H1 (cell line): ENCODE measurements at regions of chrX and their contacts with region 1.

Region 1: GRCh38 chrX:115690511-115691216 is 129.7 kb downstream of the PLS3 start:
- DNase-seq: peak; percentile 54 to 63
- H3K4me3 ChIP-seq: no peak overlapping the region
- H3K27ac ChIP-seq: peak overlapping the region; percentile 79; the same call in 1 of the 2 replicates
- H3K4me1 ChIP-seq: peaks cover 0 to 27% (median 13%) of the 10 kb centered on the region in 4 experiments; a peak in 5 of 7 replicates
- H3K27me3 ChIP-seq: no peaks in the 10 kb centered on the region
- CTCF ChIP-seq: peak in 2 of 3 experiments; percentile 50 to 68; a peak in 3 of 4 replicates
- EP300 ChIP-seq: no peak
- POLR2A ChIP-seq: no peak
- RAD21 ChIP-seq: peak; percentile 76 to 77

Region 2: DNA sequence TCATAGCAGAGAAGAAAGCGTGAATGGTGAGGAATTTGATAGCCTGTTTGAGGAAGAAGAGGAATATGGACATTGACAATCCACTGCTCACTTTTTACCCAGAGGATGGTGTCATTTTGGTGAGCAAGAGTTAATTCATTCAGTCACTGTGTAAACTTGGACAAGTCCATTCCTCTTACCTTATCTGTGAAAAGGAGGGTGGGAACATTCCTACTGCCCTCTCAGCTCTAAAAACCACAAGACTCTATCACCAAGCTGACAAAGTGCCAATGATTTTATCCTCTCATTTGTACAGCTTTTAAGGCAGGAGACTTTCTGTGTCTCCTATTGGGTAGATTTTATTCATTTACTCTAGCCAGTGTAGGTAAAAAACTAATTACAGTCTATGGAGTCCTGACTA is 297.4 kb before region 1 on chrX:
- CTCF ChIA-PET with region 1: no interaction called
- POLR2A ChIA-PET with region 1: no interaction called
- DNase-seq: no peak
- H3K4me3 ChIP-seq: no peak overlapping the region
- H3K27ac ChIP-seq: no peak overlapping the region
- H3K4me1 ChIP-seq: no peaks in the 10 kb centered on the region
- H3K27me3 ChIP-seq: no peaks in the 10 kb centered on the region
- CTCF ChIP-seq: no peak
- EP300 ChIP-seq: no peak
- POLR2A ChIP-seq: no peak
- RAD21 ChIP-seq: no peak

Region 3: GRCh38 chrX:115584696-115585095 is 106.0 kb before region 1 on chrX:
- CTCF ChIA-PET with region 1: no interaction called
- POLR2A ChIA-PET with region 1: no interaction called
- DNase-seq: no peak
- H3K4me3 ChIP-seq: no peak overlapping the region
- H3K27ac ChIP-seq: no peak overlapping the region
- H3K4me1 ChIP-seq: peaks cover 0 to 3% (median 0%) of the 10 kb centered on the region in 4 experiments; a peak in 3 of 7 replicates
- H3K27me3 ChIP-seq: no peaks in the 10 kb centered on the region
- CTCF ChIP-seq: no peak
- EP300 ChIP-seq: no peak
- POLR2A ChIP-seq: no peak
- RAD21 ChIP-seq: no peak

Region 4: GRCh38 chrX:115650916-115651315 is 39.7 kb before region 1 on chrX:
- CTCF ChIA-PET with region 1: interaction called, 17 read pairs
- POLR2A ChIA-PET with region 1: interaction called, 5 read pairs
- DNase-seq: peak in 1 of 2 experiments; percentile 50
- H3K4me3 ChIP-seq: peak overlapping the region in 1 of 4 experiments; percentile 42; a peak in 1 of 8 replicates
- H3K27ac ChIP-seq: peak overlapping the region; percentile 68; the same call in 1 of the 2 replicates
- H3K4me1 ChIP-seq: peaks cover 0 to 12% (median 4%) of the 10 kb centered on the region in 4 experiments; a peak in 5 of 7 replicates
- H3K27me3 ChIP-seq: no peaks in the 10 kb centered on the region
- CTCF ChIP-seq: peak; percentile 47 to 67 (median 67)
- EP300 ChIP-seq: no peak
- POLR2A ChIP-seq: no peak
- RAD21 ChIP-seq: peak; percentile 80 to 84

Region 5: DNA sequence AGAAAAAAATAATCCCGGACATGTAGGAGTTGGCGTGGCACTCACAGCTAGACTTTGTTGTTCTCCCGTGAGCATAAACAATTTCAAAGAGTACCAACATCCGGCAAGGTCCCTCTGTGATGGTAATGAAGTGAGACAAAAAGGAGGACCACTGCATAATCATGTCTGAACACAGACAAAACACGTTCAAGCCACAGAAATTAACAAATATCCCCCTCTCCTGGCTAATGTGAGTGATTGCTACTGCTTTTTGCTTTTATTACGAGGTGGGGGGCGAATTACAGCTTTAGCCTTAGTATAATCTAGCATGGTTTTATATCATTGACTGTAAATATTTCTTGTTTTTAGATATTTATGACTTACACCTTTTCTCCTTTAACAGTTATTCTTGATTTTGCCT is 11.2 kb before region 1 on chrX:
- CTCF ChIA-PET with region 1: interaction called, 30 read pairs
- POLR2A ChIA-PET with region 1: interaction called, 3 read pairs
- DNase-seq: no peak
- H3K4me3 ChIP-seq: no peak overlapping the region
- H3K27ac ChIP-seq: no peak overlapping the region
- H3K4me1 ChIP-seq: no peaks in the 10 kb centered on the region; a peak in 1 of 7 replicates
- H3K27me3 ChIP-seq: no peaks in the 10 kb centered on the region
- CTCF ChIP-seq: peak in 2 of 3 experiments; percentile 18 to 48; a peak in 2 of 4 replicates
- EP300 ChIP-seq: no peak
- POLR2A ChIP-seq: no peak
- RAD21 ChIP-seq: peak; percentile 50 to 61

Region 6: DNA sequence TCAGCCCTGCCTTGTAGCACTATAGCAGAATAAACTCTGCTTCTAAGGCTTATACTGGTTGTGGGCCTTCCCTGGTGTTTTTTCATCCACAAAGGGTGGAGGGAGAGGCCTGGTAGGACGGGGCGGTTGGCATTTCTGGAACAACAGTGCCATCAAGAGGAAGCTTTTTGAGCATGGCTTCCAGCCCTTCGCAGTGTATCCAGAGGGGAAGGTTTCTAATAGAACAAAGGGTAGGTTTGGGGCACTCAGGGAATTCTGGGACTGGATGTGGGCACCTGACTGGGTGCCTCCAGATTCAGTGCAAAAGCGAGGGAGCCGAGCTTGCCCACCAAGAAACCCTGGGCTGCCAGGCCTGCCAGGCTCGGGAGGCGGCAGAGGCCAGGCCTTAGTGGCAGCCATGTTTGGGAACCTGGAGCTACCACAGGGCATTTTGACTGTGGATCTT is 250.2 kb after region 1 on chrX:
- CTCF ChIA-PET with region 1: no interaction called
- POLR2A ChIA-PET with region 1: no interaction called
- DNase-seq: peak; percentile 17 to 62
- H3K4me3 ChIP-seq: no peak overlapping the region
- H3K27ac ChIP-seq: no peak overlapping the region
- H3K4me1 ChIP-seq: peaks cover 0 to 3% (median under 1%) of the 10 kb centered on the region in 4 experiments; a peak in 2 of 7 replicates
- H3K27me3 ChIP-seq: no peaks in the 10 kb centered on the region
- CTCF ChIP-seq: peak; percentile 13 to 44 (median 41)
- EP300 ChIP-seq: no peak
- POLR2A ChIP-seq: no peak
- RAD21 ChIP-seq: peak; percentile 78 to 81